ENCODE measurements at regions of chr11 and their contacts with region 1.

Region 1: GRCh38 chr11:12724301-12725046 is 50.3 kb downstream of the TEAD1 start:
- DNase-seq: peak; percentile 86
- H3K4me3 Mint-ChIP-seq: peak overlapping the region; percentile 79
- H3K27ac Mint-ChIP-seq: peak overlapping the region; percentile 100
- H3K4me1 Mint-ChIP-seq: peaks cover 94% of the 10 kb centered on the region
- H3K27me3 Mint-ChIP-seq: no peaks in the 10 kb centered on the region
- CTCF ChIP-seq: no peak

Region 2: DNA sequence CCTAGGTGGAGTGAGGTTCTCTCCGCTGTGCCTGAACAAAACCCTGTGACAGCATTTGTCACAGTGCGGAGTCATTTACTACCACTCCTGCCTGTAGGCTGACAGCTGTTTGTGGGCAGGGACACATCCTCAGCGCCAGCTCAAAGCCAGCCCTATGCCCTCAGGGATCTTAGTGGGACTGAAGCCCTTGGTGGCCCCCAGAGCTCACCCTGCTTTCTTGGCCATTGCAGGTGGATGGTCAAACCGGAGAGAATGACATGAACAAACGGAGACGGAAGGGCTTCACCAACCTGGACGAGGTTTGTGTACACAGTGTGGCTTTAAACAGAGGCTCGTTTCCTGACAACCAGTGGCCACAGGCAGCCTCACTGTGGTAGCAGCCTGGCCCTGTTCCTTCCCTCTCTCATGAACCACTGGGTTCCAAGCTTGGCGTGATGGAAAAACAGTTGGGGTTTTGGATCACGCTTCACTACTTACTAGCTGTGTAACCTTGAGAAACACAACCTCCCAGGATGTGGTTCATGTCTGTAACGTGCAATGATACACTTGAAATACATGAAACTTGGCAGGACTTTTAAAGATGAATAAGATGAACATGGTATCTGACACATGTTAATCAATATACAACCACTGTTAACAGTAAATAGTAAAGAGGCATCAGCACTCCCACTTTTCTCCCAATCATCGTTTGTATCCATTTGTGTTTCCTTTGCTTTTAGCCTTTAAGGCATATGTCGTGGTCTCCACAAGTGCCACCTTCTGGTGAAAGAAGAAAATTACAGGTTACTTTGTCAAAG is 488.3 kb before region 1 on chr11:
- CTCF ChIA-PET with region 1: no interaction called
- intact Hi-C with region 1: no loop called
- DNase-seq: no peak
- H3K4me3 Mint-ChIP-seq: no peak overlapping the region
- H3K27ac Mint-ChIP-seq: no peak overlapping the region
- H3K4me1 Mint-ChIP-seq: peaks cover 7% of the 10 kb centered on the region
- H3K27me3 Mint-ChIP-seq: no peaks in the 10 kb centered on the region
- CTCF ChIP-seq: peak; percentile 55

Region 3: GRCh38 chr11:12666915-12667314 is 57.6 kb before region 1 on chr11:
- CTCF ChIA-PET with region 1: no interaction called
- intact Hi-C with region 1: no loop called
- DNase-seq: no peak
- H3K4me3 Mint-ChIP-seq: no peak overlapping the region
- H3K27ac Mint-ChIP-seq: no peak overlapping the region
- H3K4me1 Mint-ChIP-seq: peaks cover 17% of the 10 kb centered on the region
- H3K27me3 Mint-ChIP-seq: peaks cover 25% of the 10 kb centered on the region
- CTCF ChIP-seq: no peak

Region 4: DNA sequence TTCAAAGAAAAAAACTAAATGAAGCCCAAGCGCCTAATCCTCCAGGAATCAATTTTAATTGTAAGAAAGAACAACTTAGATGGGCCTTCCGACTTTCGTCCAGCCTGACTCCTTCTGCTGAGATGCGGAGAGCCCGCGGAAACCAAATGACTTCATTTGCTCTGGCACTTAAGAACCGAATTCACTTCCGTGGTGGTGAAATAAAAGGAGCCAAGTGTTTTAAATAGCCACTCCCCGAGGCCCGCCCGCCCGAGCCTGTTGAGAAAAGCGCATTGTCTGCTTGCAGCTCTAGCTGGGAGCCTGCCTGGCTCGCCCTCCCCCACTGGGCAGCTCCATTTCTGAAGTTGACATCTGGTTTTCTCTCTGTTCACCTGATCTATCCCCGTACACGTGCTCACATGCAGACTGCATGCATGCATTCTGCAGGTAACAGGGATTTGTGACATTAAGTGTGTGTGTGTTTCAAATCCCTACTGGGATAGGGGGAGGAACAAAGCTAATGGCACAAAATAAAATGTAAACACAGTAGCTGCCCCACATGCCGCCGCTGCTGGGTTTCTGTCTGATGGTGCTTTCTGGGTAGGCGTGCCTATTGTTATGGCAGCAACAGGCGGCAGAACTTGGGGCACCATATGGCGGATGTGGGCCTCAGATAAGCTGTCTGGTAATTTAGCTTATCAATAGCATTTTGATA is 44.1 kb before region 1 on chr11:
- CTCF ChIA-PET with region 1: no interaction called
- intact Hi-C with region 1: loop called (anchors 2 kb)
- DNase-seq: peak; percentile 90
- H3K4me3 Mint-ChIP-seq: peak overlapping the region; percentile 59
- H3K27ac Mint-ChIP-seq: peak overlapping the region; percentile 79
- H3K4me1 Mint-ChIP-seq: peaks cover 71% of the 10 kb centered on the region
- H3K27me3 Mint-ChIP-seq: no peaks in the 10 kb centered on the region
- CTCF ChIP-seq: no peak

Region 5: DNA sequence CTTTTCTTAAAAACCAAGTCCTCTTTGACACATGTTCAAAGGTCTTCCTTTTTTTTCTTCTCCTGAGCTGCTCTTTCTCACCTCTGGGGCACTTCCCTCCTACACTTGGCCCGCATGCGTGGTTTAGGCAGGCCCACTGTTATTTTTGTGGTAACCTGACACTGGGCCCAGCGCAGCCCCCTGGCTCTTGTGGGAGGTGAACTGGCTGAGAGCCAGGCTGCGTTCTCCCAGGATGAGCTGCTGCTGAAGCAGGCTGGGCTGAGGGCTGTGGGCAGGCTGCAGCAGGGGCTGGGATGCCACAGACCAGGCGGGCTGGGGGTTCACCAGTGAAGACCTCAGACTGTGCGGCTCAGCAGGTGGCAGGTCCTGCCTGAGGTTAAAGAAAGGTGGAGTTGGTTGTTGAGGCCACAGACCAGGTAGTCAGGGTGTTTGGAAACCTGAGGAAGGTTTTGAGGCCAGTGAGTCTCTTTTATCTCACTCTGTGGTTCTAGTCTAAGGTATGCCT is 22.2 kb after region 1 on chr11:
- CTCF ChIA-PET with region 1: interaction called, 3 read pairs
- intact Hi-C with region 1: loop called (anchors 2 kb)
- DNase-seq: peak; percentile 81
- H3K4me3 Mint-ChIP-seq: no peak overlapping the region
- H3K27ac Mint-ChIP-seq: no peak overlapping the region
- H3K4me1 Mint-ChIP-seq: peaks cover 61% of the 10 kb centered on the region
- H3K27me3 Mint-ChIP-seq: no peaks in the 10 kb centered on the region
- CTCF ChIP-seq: no peak

Region 6: GRCh38 chr11:12802418-12803085 is 78.1 kb after region 1 on chr11:
- CTCF ChIA-PET with region 1: no interaction called
- intact Hi-C with region 1: loop called (anchors 2 kb)
- DNase-seq: peak; percentile 93
- H3K4me3 Mint-ChIP-seq: peak overlapping the region; percentile 66
- H3K27ac Mint-ChIP-seq: peak overlapping the region; percentile 99
- H3K4me1 Mint-ChIP-seq: peaks cover 99% of the 10 kb centered on the region
- H3K27me3 Mint-ChIP-seq: no peaks in the 10 kb centered on the region
- CTCF ChIP-seq: no peak

Region 7: DNA sequence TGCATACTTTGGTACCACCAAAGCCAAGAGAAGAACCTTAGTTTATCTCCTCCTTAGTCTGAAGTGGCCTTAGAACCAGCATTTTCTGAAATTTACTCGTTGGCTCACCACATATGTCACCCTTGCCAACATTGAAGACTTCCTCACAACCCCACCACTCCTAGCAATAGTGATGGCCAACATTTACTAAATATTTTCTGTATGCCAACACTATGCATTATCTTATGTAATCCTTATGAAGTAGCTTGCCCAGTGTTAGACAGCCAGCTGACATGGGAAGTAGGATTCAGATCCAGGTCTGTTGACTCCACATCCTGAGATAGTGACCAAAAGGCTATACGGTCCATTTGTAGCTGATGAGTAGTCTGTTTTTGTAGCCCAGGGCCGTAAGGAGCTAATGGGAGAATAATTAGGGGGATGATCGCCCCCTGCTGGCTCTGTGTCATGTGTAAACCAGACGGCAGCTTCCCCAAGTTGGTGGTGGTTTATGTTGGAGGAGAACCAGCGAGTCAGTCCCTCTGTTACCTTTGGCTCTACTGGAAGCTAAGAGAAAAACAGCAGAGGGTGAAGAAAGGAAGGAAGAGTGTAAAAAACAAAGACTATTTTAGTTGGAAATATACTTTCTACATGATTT is 164.2 kb after region 1 on chr11:
- CTCF ChIA-PET with region 1: interaction called, 4 read pairs
- intact Hi-C with region 1: loop called (anchors 2 kb)
- DNase-seq: peak; percentile 82
- H3K4me3 Mint-ChIP-seq: no peak overlapping the region
- H3K27ac Mint-ChIP-seq: peak overlapping the region; percentile 33
- H3K4me1 Mint-ChIP-seq: no peaks in the 10 kb centered on the region
- H3K27me3 Mint-ChIP-seq: no peaks in the 10 kb centered on the region
- CTCF ChIP-seq: peak; percentile 67

Region 8: GRCh38 chr11:13073119-13073981 is 348.9 kb after region 1 on chr11:
- CTCF ChIA-PET with region 1: no interaction called
- intact Hi-C with region 1: no loop called
- DNase-seq: peak; percentile 85
- H3K4me3 Mint-ChIP-seq: peak overlapping the region; percentile 5
- H3K27ac Mint-ChIP-seq: peak overlapping the region; percentile 94
- H3K4me1 Mint-ChIP-seq: peaks cover 51% of the 10 kb centered on the region
- H3K27me3 Mint-ChIP-seq: no peaks in the 10 kb centered on the region
- CTCF ChIP-seq: no peak